Activated B cell treated with CpG ODN at 0.5 μM for 24 hours (primary cell): ENCODE measurements at regions of chr6 and their contacts with region 1.

Region 1: GRCh38 chr6:26122793-26123674 is 35.8 kb downstream of the HFE start:
- DNase-seq: peak; percentile 68
- ATAC-seq: peak; percentile 60
- H3K4me3 Mint-ChIP-seq: peak overlapping the region; percentile 94
- H3K27ac Mint-ChIP-seq: peak overlapping the region; percentile 99
- H3K4me1 Mint-ChIP-seq: peaks cover 34% of the 10 kb centered on the region
- H3K27me3 Mint-ChIP-seq: no peaks in the 10 kb centered on the region
- CTCF ChIP-seq: no peak

Region 2: GRCh38 chr6:26054857-26055669 is 68.0 kb before region 1 on chr6:
- CTCF ChIA-PET with region 1: no interaction called
- POLR2A ChIA-PET with region 1: interaction called, 188 read pairs
- intact Hi-C with region 1: loop called (anchors 1 kb)
- DNase-seq: peak; percentile 63
- ATAC-seq: peak; percentile 65
- H3K4me3 Mint-ChIP-seq: peak overlapping the region; percentile 97
- H3K27ac Mint-ChIP-seq: peak overlapping the region; percentile 100
- H3K4me1 Mint-ChIP-seq: peaks cover 20% of the 10 kb centered on the region
- H3K27me3 Mint-ChIP-seq: no peaks in the 10 kb centered on the region
- CTCF ChIP-seq: no peak

Region 3: GRCh38 chr6:26071886-26072285 is 51.1 kb before region 1 on chr6:
- CTCF ChIA-PET with region 1: no interaction called
- POLR2A ChIA-PET with region 1: no interaction called
- intact Hi-C with region 1: no loop called
- DNase-seq: no peak
- ATAC-seq: no peak
- H3K4me3 Mint-ChIP-seq: no peak overlapping the region
- H3K27ac Mint-ChIP-seq: no peak overlapping the region
- H3K4me1 Mint-ChIP-seq: no peaks in the 10 kb centered on the region
- H3K27me3 Mint-ChIP-seq: peaks cover 2% of the 10 kb centered on the region
- CTCF ChIP-seq: no peak

Region 4: GRCh38 chr6:26136321-26136720 is 13.3 kb after region 1 on chr6:
- CTCF ChIA-PET with region 1: interaction called, 5 read pairs
- POLR2A ChIA-PET with region 1: interaction called, 70 read pairs
- intact Hi-C with region 1: loop called (anchors 1 kb)
- DNase-seq: no peak
- ATAC-seq: no peak
- H3K4me3 Mint-ChIP-seq: no peak overlapping the region
- H3K27ac Mint-ChIP-seq: no peak overlapping the region
- H3K4me1 Mint-ChIP-seq: peaks cover 51% of the 10 kb centered on the region
- H3K27me3 Mint-ChIP-seq: no peaks in the 10 kb centered on the region
- CTCF ChIP-seq: no peak

Region 5: DNA sequence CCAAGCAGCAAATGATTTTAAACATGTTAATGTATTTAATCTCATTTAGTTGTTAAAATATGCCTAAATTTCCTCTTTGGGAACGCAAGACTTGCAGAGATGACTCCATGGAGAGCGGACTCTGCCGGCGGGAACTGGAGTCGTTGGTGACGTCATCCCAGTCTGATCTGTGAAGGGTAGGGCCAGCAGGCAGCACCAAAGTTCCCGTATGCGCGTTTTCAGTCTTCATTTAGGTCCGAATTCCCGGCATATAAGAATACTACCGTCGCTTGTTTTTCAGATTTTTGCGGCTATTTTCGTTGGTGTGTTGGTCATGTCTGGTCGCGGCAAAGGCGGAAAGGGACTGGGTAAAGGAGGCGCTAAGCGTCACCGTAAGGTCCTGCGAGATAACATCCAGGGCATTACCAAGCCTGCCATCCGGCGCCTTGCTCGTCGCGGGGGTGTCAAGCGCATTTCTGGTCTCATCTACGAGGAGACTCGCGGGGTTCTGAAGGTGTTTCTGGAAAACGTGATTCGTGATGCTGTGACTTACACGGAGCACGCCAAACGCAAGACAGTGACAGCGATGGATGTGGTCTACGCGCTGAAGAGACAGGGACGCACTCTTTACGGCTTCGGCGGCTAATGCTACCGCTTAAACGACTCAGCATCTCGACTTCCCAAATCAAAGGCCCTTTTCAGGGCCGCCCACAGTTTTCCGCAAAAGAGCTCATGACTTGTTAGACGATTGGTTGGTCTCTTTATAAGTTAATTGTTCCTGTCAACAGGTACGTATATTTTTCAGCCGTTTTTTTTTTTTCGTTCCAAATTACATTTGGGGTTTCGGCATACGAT is 81.5 kb after region 1 on chr6:
- CTCF ChIA-PET with region 1: no interaction called
- POLR2A ChIA-PET with region 1: interaction called, 435 read pairs
- intact Hi-C with region 1: loop called (anchors 1 kb)
- DNase-seq: peak; percentile 70
- ATAC-seq: peak; percentile 59
- H3K4me3 Mint-ChIP-seq: no peak overlapping the region
- H3K27ac Mint-ChIP-seq: no peak overlapping the region
- H3K4me1 Mint-ChIP-seq: peaks cover 30% of the 10 kb centered on the region
- H3K27me3 Mint-ChIP-seq: peaks cover 2% of the 10 kb centered on the region
- CTCF ChIP-seq: no peak

Region 6: DNA sequence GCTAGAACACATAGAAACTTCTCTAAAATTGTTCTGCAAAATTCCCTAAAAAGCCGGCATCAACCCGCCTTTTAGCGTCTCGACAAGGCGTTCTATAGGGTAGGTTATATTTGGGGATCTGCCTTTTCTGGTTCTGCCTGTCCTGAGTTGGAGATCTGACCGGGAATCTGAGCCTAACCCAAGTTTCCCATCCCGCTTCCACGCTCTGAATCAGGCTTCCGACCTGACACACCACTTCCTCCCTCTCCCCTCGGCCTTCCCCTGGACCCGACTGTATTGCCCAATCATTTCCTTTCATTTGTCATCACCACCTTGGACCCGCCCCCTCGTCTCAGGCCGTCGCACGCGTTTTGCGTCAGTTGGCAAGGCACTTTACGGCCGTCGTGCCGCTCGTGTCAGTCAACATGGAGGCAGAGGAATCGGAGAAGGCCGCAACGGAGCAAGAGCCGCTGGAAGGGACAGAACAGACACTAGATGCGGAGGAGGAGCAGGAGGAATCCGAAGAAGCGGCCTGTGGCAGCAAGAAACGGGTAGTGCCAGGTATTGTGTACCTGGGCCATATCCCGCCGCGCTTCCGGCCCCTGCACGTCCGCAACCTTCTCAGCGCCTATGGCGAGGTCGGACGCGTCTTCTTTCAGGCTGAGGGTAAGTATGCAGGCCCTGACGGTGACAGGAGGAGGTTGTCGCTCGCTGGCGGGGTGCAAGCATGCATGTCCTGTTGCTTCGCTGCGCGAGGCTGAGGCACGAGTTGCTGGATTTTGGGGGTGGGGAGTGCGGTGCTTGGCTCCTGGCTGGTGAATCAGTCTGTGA is 473.8 kb after region 1 on chr6 and contains the start of gene ABT1:
- CTCF ChIA-PET with region 1: interaction called, 3 read pairs
- POLR2A ChIA-PET with region 1: interaction called, 6 read pairs
- intact Hi-C with region 1: loop called (anchors 2 kb)
- DNase-seq: peak; percentile 91
- ATAC-seq: peak; percentile 90
- H3K4me3 Mint-ChIP-seq: no peak within 1 kb of the TSS
- H3K27ac Mint-ChIP-seq: no peak within 1 kb of the TSS
- H3K4me1 Mint-ChIP-seq: peaks cover 17% of the 10 kb centered on the region
- H3K27me3 Mint-ChIP-seq: peaks cover 5% of the 10 kb centered on the region
- CTCF ChIP-seq: no peak
- total RNA-seq, gene ABT1: 30.7 and 30.8 TPM in 2 replicates

Region 7: DNA sequence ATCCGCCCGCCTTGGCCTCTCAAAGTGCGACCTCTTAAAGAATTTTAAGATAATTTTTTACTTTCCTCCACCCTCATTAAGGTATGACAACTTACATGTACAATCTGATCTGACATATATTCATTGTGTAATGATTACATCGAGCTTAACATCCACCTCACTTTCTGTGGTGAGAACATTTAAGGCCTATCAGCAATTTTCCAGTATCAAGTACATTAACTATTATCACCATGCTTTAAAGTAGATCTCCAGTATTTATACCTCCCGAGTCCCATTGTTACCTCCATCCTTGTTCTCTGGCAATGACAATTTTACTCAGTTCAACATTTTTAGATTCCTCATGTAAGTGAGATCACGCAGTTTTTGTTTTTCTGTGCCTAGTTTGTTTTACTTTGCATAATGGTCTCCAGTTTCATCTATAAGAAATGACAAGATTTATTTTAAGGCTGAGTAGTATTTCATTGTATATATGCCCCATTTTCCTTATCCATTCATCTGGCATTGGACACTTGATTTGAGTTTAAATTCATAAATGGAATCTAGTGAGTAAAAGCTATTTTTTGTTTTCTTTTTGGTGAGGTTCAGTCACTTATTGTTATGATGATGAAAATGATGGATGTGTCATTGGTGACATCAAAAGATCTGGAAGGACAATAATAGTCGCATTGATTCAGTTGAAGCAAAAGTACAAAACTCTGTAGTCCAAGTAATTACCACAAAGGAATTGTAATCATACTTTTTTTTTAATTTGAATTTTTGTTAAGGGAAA is 1702.2 kb after region 1 on chr6:
- CTCF ChIA-PET with region 1: no interaction called
- POLR2A ChIA-PET with region 1: interaction called, 13 read pairs
- intact Hi-C with region 1: no loop called
- DNase-seq: no peak
- ATAC-seq: no peak
- H3K4me3 Mint-ChIP-seq: peak overlapping the region; percentile 96
- H3K27ac Mint-ChIP-seq: peak overlapping the region; percentile 99
- H3K4me1 Mint-ChIP-seq: peaks cover 31% of the 10 kb centered on the region
- H3K27me3 Mint-ChIP-seq: no peaks in the 10 kb centered on the region
- CTCF ChIP-seq: no peak